Caco-2 (cell line): ENCODE measurements at regions of chr10 and their contacts with region 1.

Region 1: GRCh38 chr10:98467506-98468346 is 21.0 kb upstream of the HPS1 start:
- DNase-seq: peak; percentile 80
- H3K4me3 ChIP-seq: peak overlapping the region; percentile 48
- H3K4me3 Mint-ChIP-seq: peak overlapping the region; percentile 79
- H3K27ac Mint-ChIP-seq: peak overlapping the region; percentile 39
- H3K4me1 ChIP-seq: 0 out of 2 replicates have a peak, but pooled peaks cover 3% of the 10 kb centered on the region
- H3K4me1 Mint-ChIP-seq: peaks cover 8% of the 10 kb centered on the region
- H3K27me3 ChIP-seq: no peaks in the 10 kb centered on the region
- H3K27me3 Mint-ChIP-seq: peaks cover 5% of the 10 kb centered on the region
- CTCF ChIP-seq: peak; percentile 88 to 91

Region 2: GRCh38 chr10:98664331-98665042 is 196.8 kb after region 1 on chr10:
- CTCF ChIA-PET with region 1: no interaction called
- POLR2A ChIA-PET with region 1: no interaction called
- intact Hi-C with region 1: loop called (anchors 1 kb)
- DNase-seq: peak in 1 of 2 experiments; percentile 34
- H3K4me3 ChIP-seq: no peak overlapping the region
- H3K4me3 Mint-ChIP-seq: no peak overlapping the region
- H3K27ac Mint-ChIP-seq: no peak overlapping the region
- H3K4me1 ChIP-seq: no peaks in the 10 kb centered on the region
- H3K4me1 Mint-ChIP-seq: no peaks in the 10 kb centered on the region
- H3K27me3 ChIP-seq: no peaks in the 10 kb centered on the region
- H3K27me3 Mint-ChIP-seq: peaks cover 6% of the 10 kb centered on the region
- CTCF ChIP-seq: peak; percentile 21 to 50

Region 3: DNA sequence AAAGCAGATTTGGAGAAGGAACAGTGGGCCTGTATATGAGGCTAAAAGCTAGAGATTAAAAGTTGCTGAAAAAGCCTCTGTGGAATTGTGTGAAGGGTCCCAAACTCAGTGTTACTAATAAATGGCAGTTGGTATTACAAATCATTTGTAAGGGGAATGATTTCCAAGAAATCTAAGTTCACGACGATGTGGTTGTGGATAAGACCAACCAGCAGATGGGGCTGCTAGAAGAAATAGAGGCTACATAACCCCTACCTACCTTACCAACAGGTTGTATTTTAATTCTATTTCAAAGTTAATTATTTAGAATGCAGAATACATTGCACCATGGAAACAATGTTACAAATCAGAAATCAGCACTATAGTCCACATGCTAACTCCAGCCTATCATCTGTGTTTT is 390.8 kb after region 1 on chr10:
- CTCF ChIA-PET with region 1: no interaction called
- POLR2A ChIA-PET with region 1: no interaction called
- intact Hi-C with region 1: loop called (anchors 5 kb)
- DNase-seq: peak in 1 of 2 experiments; percentile 3
- H3K4me3 ChIP-seq: no peak overlapping the region
- H3K4me3 Mint-ChIP-seq: no peak overlapping the region
- H3K27ac Mint-ChIP-seq: no peak overlapping the region
- H3K4me1 ChIP-seq: no peaks in the 10 kb centered on the region
- H3K4me1 Mint-ChIP-seq: no peaks in the 10 kb centered on the region
- H3K27me3 ChIP-seq: no peaks in the 10 kb centered on the region
- H3K27me3 Mint-ChIP-seq: no peaks in the 10 kb centered on the region
- CTCF ChIP-seq: peak; percentile 21 to 28

Region 4: DNA sequence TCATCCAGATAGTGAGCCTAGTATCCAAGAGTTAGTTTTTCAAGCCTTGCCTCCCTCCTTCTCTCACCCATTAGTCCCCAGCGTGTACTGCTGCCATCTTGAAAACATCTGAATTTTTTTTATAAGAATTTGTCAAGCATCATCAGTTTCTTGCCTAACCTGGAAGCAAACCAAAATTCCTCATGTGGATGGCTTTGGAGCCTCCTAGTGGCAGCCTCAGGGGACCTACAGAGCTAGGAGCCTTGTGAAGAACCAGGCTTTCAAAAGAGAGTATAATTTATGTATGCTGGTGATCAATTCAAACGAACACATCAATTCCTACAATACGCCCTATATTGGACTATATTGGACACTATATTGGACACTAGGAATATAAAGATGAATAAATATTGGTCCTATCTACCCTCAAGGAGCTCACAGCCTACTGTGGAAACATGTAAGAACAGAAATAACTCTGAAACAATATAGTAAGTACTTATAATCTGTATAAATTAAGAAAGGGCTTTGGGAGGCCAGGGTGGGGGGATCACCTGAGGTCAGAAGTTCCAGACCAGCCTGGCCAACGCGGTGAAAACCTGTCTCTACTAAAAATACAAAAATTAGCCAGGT is 704.5 kb after region 1 on chr10:
- CTCF ChIA-PET with region 1: interaction called, 6 read pairs
- POLR2A ChIA-PET with region 1: no interaction called
- intact Hi-C with region 1: loop called (anchors 1 kb)
- DNase-seq: peak; percentile 56 to 59
- H3K4me3 ChIP-seq: no peak overlapping the region
- H3K4me3 Mint-ChIP-seq: no peak overlapping the region
- H3K27ac Mint-ChIP-seq: no peak overlapping the region
- H3K4me1 ChIP-seq: no peaks in the 10 kb centered on the region
- H3K4me1 Mint-ChIP-seq: no peaks in the 10 kb centered on the region
- H3K27me3 ChIP-seq: no peaks in the 10 kb centered on the region
- H3K27me3 Mint-ChIP-seq: peaks cover 22% of the 10 kb centered on the region
- CTCF ChIP-seq: peak; percentile 78 to 90

Region 5: DNA sequence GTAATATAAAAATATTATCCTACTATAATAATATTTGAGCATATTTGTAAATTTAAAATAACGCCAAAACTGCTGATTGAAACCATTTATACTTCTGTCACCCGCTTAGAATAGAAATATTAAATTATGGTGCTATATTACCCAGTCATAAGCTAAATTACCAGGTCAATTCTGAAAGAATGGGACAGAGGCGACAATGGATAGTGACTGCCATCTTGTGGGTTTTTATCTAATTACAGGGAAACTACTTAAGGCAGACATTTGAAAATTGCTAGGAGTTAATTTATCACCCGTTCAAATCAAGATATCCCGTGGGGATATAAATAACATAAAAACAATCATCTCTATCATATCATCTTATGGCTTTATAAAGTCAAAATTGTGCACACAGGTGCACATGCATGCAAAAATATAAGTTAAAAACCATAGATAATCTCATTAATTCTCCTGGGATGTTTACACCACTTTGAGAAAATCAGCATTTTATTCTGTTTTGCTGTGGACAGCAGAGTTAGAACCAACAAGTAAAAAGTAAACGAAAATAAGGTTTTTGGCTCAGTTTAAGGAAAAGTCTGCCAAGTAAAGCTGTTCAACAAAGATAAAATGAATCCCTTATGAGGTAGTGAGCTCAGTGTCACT is 809.2 kb after region 1 on chr10:
- CTCF ChIA-PET with region 1: interaction called, 3 read pairs
- POLR2A ChIA-PET with region 1: no interaction called
- intact Hi-C with region 1: loop called (anchors 10 kb)
- DNase-seq: peak in 1 of 2 experiments; percentile 13
- H3K4me3 ChIP-seq: no peak overlapping the region
- H3K4me3 Mint-ChIP-seq: no peak overlapping the region
- H3K27ac Mint-ChIP-seq: no peak overlapping the region
- H3K4me1 ChIP-seq: no peaks in the 10 kb centered on the region
- H3K4me1 Mint-ChIP-seq: no peaks in the 10 kb centered on the region
- H3K27me3 ChIP-seq: no peaks in the 10 kb centered on the region
- H3K27me3 Mint-ChIP-seq: peaks cover 6% of the 10 kb centered on the region
- CTCF ChIP-seq: peak; percentile 37 to 65

Region 6: GRCh38 chr10:99395750-99396445 is 928.2 kb after region 1 on chr10:
- CTCF ChIA-PET with region 1: no interaction called
- POLR2A ChIA-PET with region 1: no interaction called
- intact Hi-C with region 1: loop called (anchors 10 kb)
- DNase-seq: no peak
- H3K4me3 ChIP-seq: no peak overlapping the region
- H3K4me3 Mint-ChIP-seq: no peak overlapping the region
- H3K27ac Mint-ChIP-seq: peak overlapping the region; percentile 11
- H3K4me1 ChIP-seq: peaks cover 29% of the 10 kb centered on the region
- H3K4me1 Mint-ChIP-seq: peaks cover 18% of the 10 kb centered on the region
- H3K27me3 ChIP-seq: no peaks in the 10 kb centered on the region
- H3K27me3 Mint-ChIP-seq: no peaks in the 10 kb centered on the region
- CTCF ChIP-seq: no peak